ENCODE measurements at regions of chr5 and their contacts with region 1.

Region 1: GRCh38 chr5:150801117-150801927 is 22.8 kb downstream of the SMIM3 start:
- H3K4me3 ChIP-seq: peak overlapping the region; percentile 27
- H3K27ac ChIP-seq: no peak overlapping the region
- H3K4me1 ChIP-seq: no peaks in the 10 kb centered on the region
- CTCF ChIP-seq: no peak; the same call in 1 of the 2 replicates

Region 2: GRCh38 chr5:150758531-150759333 is 42.6 kb before region 1 on chr5 and contains the start of gene DCTN4:
- CTCF ChIA-PET with region 1: interaction called, 10 read pairs
- POLR2A ChIA-PET with region 1: no interaction called
- H3K4me3 ChIP-seq: peak within 1 kb of the TSS; percentile 61
- H3K27ac ChIP-seq: peak within 1 kb of the TSS; percentile 77
- H3K4me1 ChIP-seq: peaks cover 12% of the 10 kb centered on the region
- CTCF ChIP-seq: peak; percentile 74

Region 3: DNA sequence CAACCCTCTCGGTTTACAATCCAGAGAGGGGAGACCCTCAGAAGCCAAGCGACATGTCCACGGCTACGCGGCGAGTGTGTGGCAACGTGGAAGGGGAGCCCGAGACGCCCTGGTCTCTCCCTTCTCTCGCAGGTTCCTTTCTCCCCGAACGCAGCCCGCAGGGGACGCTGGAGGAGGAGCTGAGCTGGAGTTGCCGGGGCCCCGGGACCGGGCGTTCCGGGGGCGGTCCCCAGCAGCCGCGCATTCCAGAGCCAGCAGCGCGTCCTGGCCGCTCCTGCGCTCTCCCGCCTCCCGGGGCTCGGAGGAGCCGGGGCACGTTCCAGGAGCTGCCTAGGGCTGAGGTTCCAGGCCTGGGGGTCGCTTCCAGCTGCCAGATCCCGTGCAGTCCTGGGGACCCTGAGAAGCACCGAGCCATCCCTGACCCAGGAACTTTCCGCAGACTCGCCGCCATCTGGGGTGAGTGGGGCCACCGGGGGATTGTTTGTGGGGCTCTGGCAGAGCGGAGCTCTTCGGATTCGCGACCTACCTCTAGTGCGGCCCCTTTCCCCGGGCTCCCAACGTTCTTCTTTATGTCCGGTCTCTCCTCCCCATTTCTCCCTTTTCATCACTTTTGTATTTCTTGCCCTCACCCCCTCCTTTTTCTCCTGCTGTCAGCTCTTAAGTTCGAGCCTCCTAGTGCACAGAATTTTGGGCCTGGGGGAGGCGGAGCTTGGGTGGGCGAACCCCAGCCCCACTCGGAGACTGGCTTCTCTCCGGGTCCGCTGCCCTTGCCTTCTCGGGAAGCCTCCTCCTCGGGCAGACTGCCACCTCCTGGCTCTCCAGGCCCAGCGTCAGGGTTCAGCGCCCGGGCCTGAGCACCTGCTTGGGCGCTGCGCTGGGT is 22.6 kb before region 1 on chr5 and contains the start of gene SMIM3:
- CTCF ChIA-PET with region 1: interaction called, 31 read pairs
- POLR2A ChIA-PET with region 1: no interaction called
- H3K4me3 ChIP-seq: peak within 1 kb of the TSS; percentile 64
- H3K27ac ChIP-seq: peak within 1 kb of the TSS; percentile 33; the same call in 1 of the 2 replicates
- H3K4me1 ChIP-seq: peaks cover 11% of the 10 kb centered on the region
- CTCF ChIP-seq: peak; percentile 70

Region 4: DNA sequence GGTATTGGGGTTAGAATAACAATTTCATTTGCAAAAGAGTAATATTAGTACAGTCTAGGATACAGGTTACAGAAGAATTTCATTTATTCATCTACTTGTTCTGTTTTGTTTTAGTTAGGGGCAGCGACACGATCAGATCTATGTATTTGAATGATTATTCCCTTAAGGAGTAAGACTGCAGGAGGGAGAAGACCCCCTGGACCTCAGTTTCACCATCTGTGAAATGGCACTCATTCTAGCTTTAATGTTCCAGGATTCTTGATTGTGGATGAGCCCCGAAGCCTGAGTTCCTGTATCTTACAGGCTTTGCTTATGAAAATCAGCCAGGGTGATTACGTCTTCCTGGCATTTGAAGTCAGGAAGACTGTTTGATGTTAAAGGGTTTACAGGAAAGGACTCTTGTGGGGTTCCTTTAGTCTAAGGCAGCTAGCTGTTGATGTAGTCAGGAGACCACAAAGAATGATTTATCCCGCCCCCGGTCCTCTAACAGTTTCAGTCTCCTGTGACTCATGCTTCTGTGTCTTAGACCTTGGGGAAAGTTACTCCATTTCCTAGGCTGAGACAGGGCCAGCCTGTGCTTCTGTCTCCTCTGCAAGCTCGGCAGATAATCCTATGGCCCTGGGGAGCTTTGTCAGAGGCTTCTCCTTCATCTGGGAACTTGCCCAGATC is 11.2 kb before region 1 on chr5:
- CTCF ChIA-PET with region 1: interaction called, 37 read pairs
- POLR2A ChIA-PET with region 1: no interaction called
- H3K4me3 ChIP-seq: no peak overlapping the region
- H3K27ac ChIP-seq: no peak overlapping the region
- H3K4me1 ChIP-seq: peaks cover 7% of the 10 kb centered on the region; the same call in 1 of the 2 replicates
- CTCF ChIP-seq: no peak

Region 5: DNA sequence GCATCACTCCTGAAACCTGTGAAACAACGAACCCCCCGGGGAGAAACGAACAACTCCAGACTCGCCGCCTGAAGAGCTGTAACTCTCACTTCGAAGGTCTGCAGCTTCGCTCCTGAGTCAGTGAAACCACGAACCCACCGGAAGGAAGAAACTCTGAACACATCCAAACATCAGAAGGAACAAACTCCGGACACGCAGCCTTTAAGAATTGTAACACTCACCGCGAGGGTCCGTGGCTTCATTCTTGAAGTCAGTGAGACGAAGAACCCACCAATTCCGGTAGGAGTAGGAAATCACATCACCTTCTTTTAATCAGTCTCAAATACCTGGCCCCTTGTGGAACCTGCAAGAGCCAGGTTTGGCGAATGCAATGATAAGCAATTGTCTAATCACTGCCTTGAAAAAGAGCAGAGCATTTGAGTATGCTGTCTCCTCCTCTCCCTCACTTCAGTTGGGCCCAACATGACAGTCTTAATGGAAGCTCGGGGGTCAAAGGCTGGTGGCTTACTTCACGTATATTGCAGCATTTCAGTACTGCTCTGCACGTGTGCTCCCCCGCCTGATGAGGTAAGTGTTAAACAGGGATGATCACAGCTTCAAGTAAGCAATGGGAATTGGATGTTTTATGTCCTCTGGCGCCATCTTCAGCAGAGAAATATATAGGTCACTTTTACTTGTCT is 45.5 kb after region 1 on chr5:
- CTCF ChIA-PET with region 1: interaction called, 31 read pairs
- POLR2A ChIA-PET with region 1: no interaction called
- H3K4me3 ChIP-seq: no peak overlapping the region
- H3K27ac ChIP-seq: no peak overlapping the region
- H3K4me1 ChIP-seq: no peaks in the 10 kb centered on the region
- CTCF ChIP-seq: peak; percentile 82

Measured in HEK293 (cell line).